Activated naive CD4-positive, alpha-beta T cell treated with anti-CD3 and anti-CD28 coated beads for 36 hours (primary cell): ENCODE measurements at regions of chr6 and their contacts with region 1.

Region 1: GRCh38 chr6:137975188-137975940 is 108.3 kb downstream of the TNFAIP3 start:
- DNase-seq: peak; percentile 64
- H3K4me3 Mint-ChIP-seq: peak overlapping the region; percentile 73
- H3K27ac Mint-ChIP-seq: peak overlapping the region; percentile 91
- H3K4me1 Mint-ChIP-seq: peaks cover 72% of the 10 kb centered on the region
- H3K27me3 Mint-ChIP-seq: no peaks in the 10 kb centered on the region

Region 2: DNA sequence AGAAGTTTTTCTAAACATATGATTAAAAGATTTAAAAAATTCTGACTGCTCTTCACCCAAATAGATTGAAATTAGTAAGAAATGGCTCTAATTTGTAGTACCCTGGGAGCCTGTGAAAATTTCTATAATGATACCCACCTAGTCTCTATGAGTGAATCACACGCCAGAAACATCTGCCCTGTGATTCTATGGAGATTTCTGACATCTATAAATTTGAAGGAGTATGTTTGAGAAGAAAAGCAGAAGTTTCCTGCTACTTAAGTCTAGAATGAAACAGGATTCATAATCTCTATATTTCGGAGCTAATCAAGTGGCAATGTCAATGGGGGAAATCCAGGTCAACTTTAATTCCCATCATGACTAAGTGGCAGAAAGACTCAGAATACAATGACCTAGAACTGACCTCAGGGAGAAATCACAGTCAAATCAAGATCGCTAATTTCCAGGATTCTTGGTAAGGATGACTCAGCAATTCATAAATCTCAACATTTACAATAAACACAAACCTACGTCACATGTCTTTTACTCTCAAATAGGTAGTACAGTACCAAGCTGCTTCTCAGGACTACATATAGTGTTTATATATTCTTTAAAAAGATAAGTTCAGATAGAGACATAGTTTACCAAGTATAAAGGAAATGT is 294.5 kb before region 1 on chr6:
- CTCF ChIA-PET with region 1: interaction called, 3 read pairs
- intact Hi-C with region 1: loop called (anchors 1 kb)
- DNase-seq: no peak
- H3K4me3 Mint-ChIP-seq: no peak overlapping the region
- H3K27ac Mint-ChIP-seq: peak overlapping the region; percentile 84
- H3K4me1 Mint-ChIP-seq: peaks cover 54% of the 10 kb centered on the region
- H3K27me3 Mint-ChIP-seq: peaks cover 8% of the 10 kb centered on the region

Region 3: DNA sequence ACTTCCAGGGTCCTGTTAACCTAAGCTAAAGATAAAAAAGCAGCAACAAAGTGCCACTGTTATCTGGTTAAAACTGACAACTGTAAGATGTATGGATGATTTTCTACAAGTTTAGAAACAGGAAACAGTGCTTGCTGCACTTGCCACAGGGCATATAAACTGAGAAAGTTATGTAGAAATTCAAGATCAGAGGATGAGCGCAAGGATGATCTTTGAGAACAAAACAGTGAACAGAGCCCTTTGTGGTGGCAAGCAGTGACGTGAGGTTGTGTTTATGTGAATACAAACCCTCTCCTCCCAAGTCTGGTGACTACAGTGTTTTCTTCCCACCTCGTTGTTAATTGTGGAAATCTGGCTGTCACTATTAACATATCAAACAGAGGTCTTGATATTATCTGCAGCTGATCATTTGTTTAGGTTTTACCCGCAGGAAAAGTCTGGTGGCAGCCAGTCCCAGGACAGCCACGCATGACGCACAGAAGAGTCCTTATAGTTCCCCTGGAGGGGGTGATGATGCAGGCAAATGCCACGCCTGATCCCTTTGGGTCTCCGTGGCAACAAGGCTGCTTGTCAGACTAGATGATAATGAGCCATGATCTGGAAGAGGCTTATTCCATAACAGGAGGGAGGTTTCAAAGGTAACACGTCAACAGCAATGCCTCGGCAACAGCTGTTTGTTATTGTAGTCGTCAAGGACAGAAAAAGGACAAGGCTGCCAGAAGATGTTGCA is 151.4 kb before region 1 on chr6:
- CTCF ChIA-PET with region 1: no interaction called
- intact Hi-C with region 1: loop called (anchors 1 kb)
- DNase-seq: peak; percentile 84
- H3K4me3 Mint-ChIP-seq: peak overlapping the region; percentile 67
- H3K27ac Mint-ChIP-seq: peak overlapping the region; percentile 95
- H3K4me1 Mint-ChIP-seq: peaks cover 81% of the 10 kb centered on the region
- H3K27me3 Mint-ChIP-seq: no peaks in the 10 kb centered on the region

Region 4: DNA sequence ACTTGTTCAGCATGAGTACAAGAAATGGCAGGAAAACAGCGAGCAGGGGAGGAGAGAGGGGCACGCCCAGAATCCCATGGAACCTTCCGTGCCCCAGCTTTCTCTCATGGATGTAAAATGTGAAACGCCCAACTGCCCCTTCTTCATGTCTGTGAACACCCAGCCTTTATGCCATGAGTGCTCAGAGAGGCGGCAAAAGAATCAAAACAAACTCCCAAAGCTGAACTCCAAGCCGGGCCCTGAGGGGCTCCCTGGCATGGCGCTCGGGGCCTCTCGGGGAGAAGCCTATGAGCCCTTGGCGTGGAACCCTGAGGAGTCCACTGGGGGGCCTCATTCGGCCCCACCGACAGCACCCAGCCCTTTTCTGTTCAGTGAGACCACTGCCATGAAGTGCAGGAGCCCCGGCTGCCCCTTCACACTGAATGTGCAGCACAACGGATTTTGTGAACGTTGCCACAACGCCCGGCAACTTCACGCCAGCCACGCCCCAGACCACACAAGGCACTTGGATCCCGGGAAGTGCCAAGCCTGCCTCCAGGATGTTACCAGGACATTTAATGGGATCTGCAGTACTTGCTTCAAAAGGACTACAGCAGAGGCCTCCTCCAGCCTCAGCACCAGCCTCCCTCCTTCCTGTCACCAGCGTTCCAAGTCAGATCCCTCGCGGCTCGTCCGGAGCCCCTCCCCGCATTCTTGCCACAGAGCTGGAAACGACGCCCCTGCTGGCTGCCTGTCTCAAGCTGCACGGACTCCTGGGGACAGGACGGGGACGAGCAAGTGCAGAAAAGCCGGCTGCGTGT is 96.7 kb before region 1 on chr6:
- CTCF ChIA-PET with region 1: interaction called, 17 read pairs
- intact Hi-C with region 1: loop called (anchors 1 kb)
- DNase-seq: no peak
- H3K4me3 Mint-ChIP-seq: peak overlapping the region; percentile 65
- H3K27ac Mint-ChIP-seq: peak overlapping the region; percentile 99
- H3K4me1 Mint-ChIP-seq: peaks cover 82% of the 10 kb centered on the region
- H3K27me3 Mint-ChIP-seq: no peaks in the 10 kb centered on the region

Region 5: GRCh38 chr6:137938770-137939379 is 36.5 kb before region 1 on chr6:
- CTCF ChIA-PET with region 1: interaction called, 17 read pairs
- intact Hi-C with region 1: no loop called
- DNase-seq: no peak
- H3K4me3 Mint-ChIP-seq: no peak overlapping the region
- H3K27ac Mint-ChIP-seq: peak overlapping the region; percentile 80
- H3K4me1 Mint-ChIP-seq: peaks cover 43% of the 10 kb centered on the region
- H3K27me3 Mint-ChIP-seq: no peaks in the 10 kb centered on the region

Region 6: GRCh38 chr6:138001750-138002349 is 26.5 kb after region 1 on chr6:
- CTCF ChIA-PET with region 1: interaction called, 8 read pairs
- intact Hi-C with region 1: loop called (anchors 1 kb)
- DNase-seq: peak; percentile 84
- H3K4me3 Mint-ChIP-seq: no peak overlapping the region
- H3K27ac Mint-ChIP-seq: no peak overlapping the region
- H3K4me1 Mint-ChIP-seq: peaks cover 16% of the 10 kb centered on the region
- H3K27me3 Mint-ChIP-seq: peaks cover 3% of the 10 kb centered on the region